ENCODE measurements at regions of chr7 and their contacts with region 1.

Region 1: DNA sequence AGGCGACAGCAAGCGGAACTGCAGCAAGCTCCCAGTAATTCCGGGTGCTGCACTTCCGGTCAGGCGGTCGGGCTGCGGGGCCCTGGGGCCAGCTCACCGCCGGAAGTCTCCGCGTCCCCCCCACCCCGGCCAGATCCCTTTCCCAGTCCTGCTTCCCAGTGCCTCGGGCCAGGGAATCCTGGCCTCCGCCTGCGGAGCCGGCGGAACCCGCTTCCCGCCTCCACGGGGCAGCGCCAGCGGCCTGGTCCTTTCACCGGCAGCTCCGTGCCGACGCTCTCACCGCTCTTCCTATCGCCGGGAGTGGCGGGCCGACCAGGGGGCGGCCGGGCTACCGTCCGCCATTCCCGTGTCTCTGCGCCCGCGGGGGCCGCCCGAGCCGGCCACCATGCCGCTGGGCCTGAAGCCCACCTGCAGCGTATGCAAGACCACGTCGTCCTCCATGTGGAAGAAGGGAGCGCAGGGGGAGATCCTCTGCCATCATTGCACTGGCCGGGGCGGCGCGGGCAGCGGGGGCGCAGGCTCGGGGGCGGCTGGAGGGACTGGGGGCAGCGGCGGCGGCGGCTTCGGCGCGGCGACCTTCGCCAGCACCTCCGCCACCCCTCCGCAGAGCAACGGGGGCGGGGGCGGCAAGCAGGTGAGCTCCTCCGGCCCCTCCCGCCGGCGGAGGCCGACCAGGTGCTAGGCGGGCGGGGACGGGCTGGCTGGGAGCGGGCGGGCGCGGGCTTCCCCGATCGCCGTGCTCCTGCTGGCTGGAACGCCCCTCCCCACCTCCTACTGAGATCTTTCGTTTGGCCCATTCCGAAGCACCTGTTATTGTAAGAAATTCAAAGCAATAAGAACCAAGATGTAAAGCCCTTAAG is at the start of gene GATAD1:
- DNase-seq: peak; percentile 99
- H3K4me3 ChIP-seq: peak within 1 kb of the TSS; percentile 70 to 99
- H3K27ac ChIP-seq: peak within 1 kb of the TSS; percentile 77 to 97
- H3K4me1 ChIP-seq: peaks cover 8 to 13% of the 10 kb centered on the region in 2 experiments; a peak in 2 of 4 replicates
- H3K27me3 ChIP-seq: no peaks in the 10 kb centered on the region
- CTCF ChIP-seq: no peak; the same call in 1 of the 2 replicates
- EP300 ChIP-seq: peak in 1 of 2 experiments; percentile 56; a peak in 2 of 4 replicates
- RAD21 ChIP-seq: no peak
- polyA plus RNA-seq, gene GATAD1: 30.6 and 47.9 TPM in 2 replicates

Region 2: GRCh38 chr7:91880413-91881241 is 566.9 kb before region 1 on chr7 and contains the start of gene MTERF1:
- CTCF ChIA-PET with region 1: interaction called, 41 read pairs
- POLR2A ChIA-PET with region 1: interaction called, 10 read pairs
- DNase-seq: peak; percentile 93
- H3K4me3 ChIP-seq: peak within 1 kb of the TSS; percentile 72 to 90
- H3K27ac ChIP-seq: peak within 1 kb of the TSS; percentile 61 to 78
- H3K4me1 ChIP-seq: peaks cover 8 to 9% of the 10 kb centered on the region in 2 experiments
- H3K27me3 ChIP-seq: no peaks in the 10 kb centered on the region
- CTCF ChIP-seq: peak; percentile 100
- EP300 ChIP-seq: no peak
- RAD21 ChIP-seq: peak; percentile 91
- polyA plus RNA-seq, gene MTERF1: 6.1 and 12.0 TPM in 2 replicates

Region 3: GRCh38 chr7:92134271-92135051 is 313.1 kb before region 1 on chr7 and contains the start of gene CYP51A1:
- CTCF ChIA-PET with region 1: interaction called, 10 read pairs
- POLR2A ChIA-PET with region 1: interaction called, 5 read pairs
- DNase-seq: peak; percentile 99
- H3K4me3 ChIP-seq: peak within 1 kb of the TSS; percentile 82 to 99
- H3K27ac ChIP-seq: peak within 1 kb of the TSS; percentile 95 to 98
- H3K4me1 ChIP-seq: peaks cover 0 to 16% of the 10 kb centered on the region in 2 experiments; a peak in 3 of 4 replicates
- H3K27me3 ChIP-seq: no peaks in the 10 kb centered on the region
- CTCF ChIP-seq: no peak
- EP300 ChIP-seq: peak in 1 of 2 experiments; percentile 30; a peak in 2 of 4 replicates
- RAD21 ChIP-seq: no peak
- polyA plus RNA-seq, gene CYP51A1: 4.3 and 4.7 TPM in 2 replicates

Region 4: DNA sequence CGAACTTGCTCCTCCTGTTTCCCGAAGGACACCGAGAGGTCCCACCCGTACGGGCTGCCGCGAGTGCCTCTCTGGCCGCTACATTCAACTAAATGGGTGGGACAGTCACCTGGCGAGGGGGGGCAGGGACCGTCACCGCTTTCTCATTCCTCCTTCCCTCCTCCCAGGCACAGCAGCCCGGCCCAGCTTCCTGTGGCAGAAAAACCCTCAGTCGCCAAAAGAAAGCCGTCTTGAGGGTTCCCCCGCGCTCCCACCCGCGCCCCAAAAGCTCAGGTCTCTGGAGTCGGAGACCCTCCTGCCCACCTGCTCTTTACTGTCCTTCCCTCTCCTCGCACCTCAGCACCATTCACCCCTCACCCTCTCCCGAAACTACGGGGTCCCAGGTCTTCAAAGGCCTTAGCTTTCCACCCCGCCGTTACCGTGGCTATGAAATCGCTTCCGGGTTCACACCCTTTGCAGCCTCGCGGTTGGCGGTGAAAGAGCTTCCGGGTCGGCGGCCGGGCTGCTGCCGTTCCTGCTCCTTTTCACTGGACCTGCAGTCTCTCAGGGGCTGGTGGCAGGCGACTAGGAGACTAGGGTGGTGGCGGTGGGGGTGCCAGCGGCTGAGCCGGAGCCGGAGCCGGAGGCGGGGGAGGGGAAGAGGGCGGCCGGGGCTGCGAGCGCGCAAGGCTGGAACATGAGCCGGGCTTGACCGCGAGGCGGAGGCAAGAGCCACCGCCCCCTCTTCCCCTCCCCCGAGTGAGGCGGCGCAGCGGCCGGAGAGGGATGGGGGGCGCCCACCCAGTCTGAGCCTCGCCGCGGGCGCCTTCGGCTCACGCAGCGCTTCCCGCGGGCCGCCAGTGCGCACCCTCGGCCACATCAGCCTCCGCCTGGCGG is 201.8 kb before region 1 on chr7 and contains the starts of genes ANKIB1 and KRIT1:
- CTCF ChIA-PET with region 1: interaction called, 27 read pairs
- POLR2A ChIA-PET with region 1: interaction called, 29 read pairs
- DNase-seq: peak; percentile 96
- H3K4me3 ChIP-seq: peak within 1 kb of the TSS; percentile 95
- H3K27ac ChIP-seq: peak within 1 kb of the TSS; percentile 86 to 93
- H3K4me1 ChIP-seq: peaks cover 11 to 25% of the 10 kb centered on the region in 2 experiments; a peak in 3 of 4 replicates
- H3K27me3 ChIP-seq: no peaks in the 10 kb centered on the region
- CTCF ChIP-seq: peak; percentile 26
- EP300 ChIP-seq: peak in 1 of 2 experiments; percentile 40; a peak in 1 of 4 replicates
- RAD21 ChIP-seq: no peak
- polyA plus RNA-seq, gene ANKIB1: 24.6 and 32.5 TPM in 2 replicates
- polyA plus RNA-seq, gene KRIT1: 38.5 and 53.3 TPM in 2 replicates

Region 5: DNA sequence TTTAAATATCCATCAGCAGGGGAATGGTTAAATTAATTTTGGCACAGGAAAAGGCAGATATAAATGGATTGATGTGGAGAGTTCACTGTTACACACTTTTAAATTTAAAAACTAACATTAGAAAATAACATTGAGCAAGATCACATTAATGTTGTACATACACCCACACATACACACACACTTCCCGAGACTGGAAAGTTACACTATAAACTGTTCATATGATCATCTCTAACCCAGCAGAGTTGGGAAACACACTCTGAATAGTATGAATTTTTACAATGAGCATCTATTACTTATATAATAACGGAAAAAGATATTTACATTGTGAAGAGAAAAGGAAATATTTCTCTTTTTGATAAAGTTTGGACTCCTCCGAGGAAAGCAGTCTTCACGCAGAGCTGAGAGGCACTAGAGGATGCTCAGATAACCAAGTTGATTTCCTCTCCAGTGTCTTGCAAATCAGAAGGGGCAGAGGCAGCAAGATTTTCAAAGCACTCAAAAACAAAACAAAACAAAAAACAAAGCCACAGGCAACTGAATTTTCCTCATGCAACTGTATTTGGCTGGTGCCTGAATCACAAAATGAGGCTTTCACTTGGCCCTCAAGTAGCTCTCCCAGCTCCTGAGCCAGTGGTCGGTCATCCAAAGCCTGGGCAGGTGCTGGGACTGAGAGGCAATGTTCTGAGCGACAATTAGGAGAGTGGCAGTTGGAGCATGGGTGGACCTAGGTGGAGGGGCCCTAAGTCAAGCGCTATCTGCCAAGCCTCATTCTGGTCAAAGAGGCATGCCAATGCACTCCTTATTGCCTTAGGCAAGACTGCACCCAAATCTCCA is 10.7 kb before region 1 on chr7:
- CTCF ChIA-PET with region 1: interaction called, 15 read pairs
- POLR2A ChIA-PET with region 1: no interaction called
- DNase-seq: no peak
- H3K4me3 ChIP-seq: no peak overlapping the region
- H3K27ac ChIP-seq: no peak overlapping the region
- H3K4me1 ChIP-seq: peaks cover 0 to 2% of the 10 kb centered on the region in 2 experiments; a peak in 1 of 4 replicates
- H3K27me3 ChIP-seq: no peaks in the 10 kb centered on the region; the same call in 1 of the 2 replicates
- CTCF ChIP-seq: no peak
- EP300 ChIP-seq: no peak
- RAD21 ChIP-seq: no peak